MCF 10A (cell line): ENCODE measurements at regions of chr4 and their contacts with region 1.

Region 1: GRCh38 chr4:185811509-185812364 is at the start of gene SORBS2:
- DNase-seq: peak; percentile 43
- H3K4me3 Mint-ChIP-seq: peak within 1 kb of the TSS; percentile 77
- H3K27ac Mint-ChIP-seq: peak within 1 kb of the TSS; percentile 79
- H3K4me1 Mint-ChIP-seq: peaks cover 13% of the 10 kb centered on the region
- H3K27me3 Mint-ChIP-seq: no peaks in the 10 kb centered on the region
- CTCF ChIP-seq: no peak
- total RNA-seq, gene SORBS2: 19.3 and 29.1 TPM in 2 replicates

Region 2: GRCh38 chr4:185640811-185641675 is 170.7 kb before region 1 on chr4:
- CTCF ChIA-PET with region 1: interaction called, 5 read pairs
- POLR2A ChIA-PET with region 1: interaction called, 6 read pairs
- intact Hi-C with region 1: loop called (anchors 2 kb)
- DNase-seq: peak; percentile 68
- H3K4me3 Mint-ChIP-seq: no peak overlapping the region
- H3K27ac Mint-ChIP-seq: no peak overlapping the region
- H3K4me1 Mint-ChIP-seq: no peaks in the 10 kb centered on the region
- H3K27me3 Mint-ChIP-seq: no peaks in the 10 kb centered on the region
- CTCF ChIP-seq: peak; percentile 33

Region 3: DNA sequence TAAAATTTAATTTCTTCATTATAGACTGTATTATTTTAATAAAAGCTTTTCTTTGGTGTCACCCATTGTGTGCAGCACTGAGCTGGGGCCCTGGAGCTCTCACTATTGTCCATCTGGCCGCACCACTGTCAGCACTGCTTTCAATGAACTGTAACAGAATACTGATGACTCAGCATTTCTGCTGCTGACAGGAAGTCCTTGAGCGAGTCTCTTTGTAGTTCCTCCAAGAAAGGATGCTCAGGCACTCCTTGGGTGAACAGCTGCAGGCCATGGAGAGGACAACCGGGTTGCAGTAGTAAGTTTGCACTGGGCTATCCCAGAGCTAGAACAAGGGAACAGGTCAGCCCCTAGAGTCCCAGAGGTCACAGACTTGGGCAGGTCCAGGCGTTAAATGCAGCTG is 81.3 kb before region 1 on chr4:
- CTCF ChIA-PET with region 1: no interaction called
- POLR2A ChIA-PET with region 1: interaction called, 11 read pairs
- intact Hi-C with region 1: no loop called
- DNase-seq: peak; percentile 76
- H3K4me3 Mint-ChIP-seq: peak overlapping the region; percentile 35
- H3K27ac Mint-ChIP-seq: peak overlapping the region; percentile 85
- H3K4me1 Mint-ChIP-seq: peaks cover 30% of the 10 kb centered on the region
- H3K27me3 Mint-ChIP-seq: no peaks in the 10 kb centered on the region
- CTCF ChIP-seq: no peak

Region 4: DNA sequence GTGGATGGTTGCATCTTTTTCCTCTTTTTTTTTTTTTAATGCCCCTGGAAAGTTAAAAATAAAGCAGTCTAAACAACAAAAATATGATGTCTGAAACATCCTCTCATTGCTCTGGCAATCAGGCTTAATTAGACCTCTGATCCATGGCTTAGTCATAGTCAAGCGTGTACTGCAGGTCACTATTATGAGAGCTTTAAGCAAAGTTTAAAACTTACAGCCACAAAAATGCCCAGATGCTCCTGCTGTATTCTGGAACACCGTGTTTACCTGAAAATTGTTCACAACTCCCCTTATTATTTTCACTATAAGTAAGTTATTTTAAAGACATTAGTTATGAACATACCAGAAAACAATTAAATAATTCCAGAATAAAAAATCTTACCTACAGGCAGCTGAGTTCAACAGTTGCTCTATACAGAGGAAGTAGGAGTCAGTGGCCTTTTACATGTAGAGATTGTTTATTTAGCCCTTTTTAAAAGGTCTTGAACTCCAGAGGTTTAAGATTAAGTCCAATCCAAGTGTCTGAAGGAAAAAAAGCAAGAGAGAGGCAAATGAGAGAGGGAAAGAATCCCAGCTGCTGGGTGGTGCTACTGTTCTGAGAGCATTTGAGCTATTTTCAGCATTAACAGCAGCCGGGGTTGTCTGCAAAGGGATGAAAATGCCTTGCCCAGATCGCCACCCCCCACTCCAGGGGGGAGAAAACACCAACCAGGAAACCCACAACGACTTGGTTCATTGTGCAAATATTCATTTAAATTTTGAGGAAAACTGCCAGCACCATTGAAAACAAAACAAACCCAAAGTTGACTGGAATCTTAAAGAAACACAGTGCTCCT is 36.7 kb before region 1 on chr4:
- CTCF ChIA-PET with region 1: interaction called, 4 read pairs
- POLR2A ChIA-PET with region 1: interaction called, 12 read pairs
- intact Hi-C with region 1: no loop called
- DNase-seq: peak; percentile 70
- H3K4me3 Mint-ChIP-seq: peak overlapping the region; percentile 60
- H3K27ac Mint-ChIP-seq: peak overlapping the region; percentile 92
- H3K4me1 Mint-ChIP-seq: peaks cover 41% of the 10 kb centered on the region
- H3K27me3 Mint-ChIP-seq: no peaks in the 10 kb centered on the region
- CTCF ChIP-seq: no peak

Region 5: GRCh38 chr4:186037692-186038658 is 226.2 kb after region 1 on chr4:
- CTCF ChIA-PET with region 1: interaction called, 13 read pairs
- POLR2A ChIA-PET with region 1: interaction called, 3 read pairs
- intact Hi-C with region 1: no loop called
- DNase-seq: peak; percentile 79
- H3K4me3 Mint-ChIP-seq: no peak overlapping the region
- H3K27ac Mint-ChIP-seq: no peak overlapping the region
- H3K4me1 Mint-ChIP-seq: no peaks in the 10 kb centered on the region
- H3K27me3 Mint-ChIP-seq: no peaks in the 10 kb centered on the region
- CTCF ChIP-seq: peak; percentile 75